K562 (cell line): ENCODE measurements at regions of chr6 and their contacts with region 1.

Region 1: DNA sequence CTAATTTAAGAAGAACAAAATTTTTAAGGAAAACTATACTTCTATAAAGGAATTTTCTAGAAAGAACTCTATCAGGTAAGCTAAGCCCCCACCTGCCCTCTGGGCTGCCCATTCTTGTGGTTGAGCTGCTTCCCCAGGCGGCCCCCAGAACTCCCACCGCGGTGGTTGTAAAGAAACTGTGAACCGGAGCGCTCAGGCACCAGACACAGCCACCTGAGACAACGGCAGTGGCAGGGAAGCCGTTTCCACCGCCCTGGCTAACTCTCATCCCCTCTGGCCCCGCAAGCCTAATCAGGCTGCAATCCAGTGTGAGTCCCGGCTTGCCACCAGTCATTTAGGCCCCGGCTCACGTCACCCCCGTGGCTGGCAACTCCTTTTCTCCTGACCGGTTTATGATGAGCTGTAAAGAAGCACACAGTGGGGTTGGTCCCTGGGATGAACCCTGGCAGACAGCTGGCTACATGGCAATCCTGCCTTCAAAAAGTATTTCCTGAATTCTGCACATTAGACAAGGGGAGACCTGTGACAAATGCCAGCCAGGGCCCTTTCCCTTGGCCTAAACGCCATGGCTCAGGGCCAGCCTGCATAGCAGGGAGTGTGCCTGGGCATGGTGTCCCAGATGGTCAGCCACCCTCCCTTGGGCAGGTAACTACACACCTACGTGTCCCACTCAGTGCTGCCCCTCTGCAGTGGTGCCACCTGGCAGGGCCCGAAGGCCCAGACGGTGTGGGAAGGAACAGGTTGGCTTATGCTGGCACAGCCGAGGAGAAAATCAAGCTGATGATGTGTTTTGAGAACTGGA is 63.8 kb upstream of the GPR31 start:
- DNase-seq: no peak
- ATAC-seq: no peak
- H3K4me3 ChIP-seq: no peak overlapping the region
- H3K27ac ChIP-seq: no peak overlapping the region
- H3K4me1 ChIP-seq: no peaks in the 10 kb centered on the region
- H3K27me3 ChIP-seq: peaks cover 16 to 26% of the 10 kb centered on the region in 2 experiments; a peak in 3 of 5 replicates
- CTCF ChIP-seq: no peak
- EP300 ChIP-seq: no peak
- POLR2A ChIP-seq: no peak
- RAD21 ChIP-seq: no peak

Region 2: DNA sequence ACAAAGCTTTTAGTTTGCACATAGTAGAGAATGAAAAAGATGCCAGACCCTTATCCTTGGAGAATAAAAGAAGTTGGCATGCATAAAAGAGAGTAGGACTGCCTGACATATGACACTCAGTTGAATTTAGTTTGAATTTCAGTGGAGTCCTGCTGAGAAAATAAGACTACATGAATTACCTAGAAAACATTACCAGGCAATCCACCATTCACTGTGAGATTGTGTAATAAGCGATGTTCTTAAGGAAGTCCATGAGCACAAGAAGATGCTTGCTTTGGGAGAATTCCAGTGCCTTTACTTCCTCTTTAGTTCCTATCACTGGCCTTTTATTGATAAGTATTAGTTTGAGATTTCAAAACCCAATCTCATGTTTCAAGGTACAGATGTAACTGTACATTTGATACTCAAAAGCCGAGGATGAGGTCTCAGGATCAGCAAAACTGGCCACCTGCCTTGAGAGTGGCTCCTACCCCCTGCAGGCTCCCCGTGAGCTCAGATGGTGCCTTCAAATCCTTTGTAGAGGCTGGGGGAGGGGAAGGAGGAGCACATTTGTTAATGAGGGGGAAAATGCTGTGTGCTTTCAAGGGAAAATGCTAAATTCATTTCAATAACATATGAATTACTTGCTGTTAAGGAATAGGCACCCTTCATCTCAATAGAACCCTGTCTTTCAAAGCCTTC is 58.3 kb after region 1 on chr6:
- CTCF ChIA-PET with region 1: no interaction called
- POLR2A ChIA-PET with region 1: interaction called, 3 read pairs
- in situ Hi-C with region 1: loop called (anchors 5 kb)
- intact Hi-C with region 1: no loop called
- DNase-seq: no peak
- ATAC-seq: no peak
- H3K4me3 ChIP-seq: no peak overlapping the region
- H3K27ac ChIP-seq: no peak overlapping the region
- H3K4me1 ChIP-seq: no peaks in the 10 kb centered on the region
- H3K27me3 ChIP-seq: peaks cover 4 to 33% of the 10 kb centered on the region in 2 experiments; a peak in 3 of 5 replicates
- CTCF ChIP-seq: no peak
- EP300 ChIP-seq: no peak
- POLR2A ChIP-seq: no peak
- RAD21 ChIP-seq: no peak

Region 3: DNA sequence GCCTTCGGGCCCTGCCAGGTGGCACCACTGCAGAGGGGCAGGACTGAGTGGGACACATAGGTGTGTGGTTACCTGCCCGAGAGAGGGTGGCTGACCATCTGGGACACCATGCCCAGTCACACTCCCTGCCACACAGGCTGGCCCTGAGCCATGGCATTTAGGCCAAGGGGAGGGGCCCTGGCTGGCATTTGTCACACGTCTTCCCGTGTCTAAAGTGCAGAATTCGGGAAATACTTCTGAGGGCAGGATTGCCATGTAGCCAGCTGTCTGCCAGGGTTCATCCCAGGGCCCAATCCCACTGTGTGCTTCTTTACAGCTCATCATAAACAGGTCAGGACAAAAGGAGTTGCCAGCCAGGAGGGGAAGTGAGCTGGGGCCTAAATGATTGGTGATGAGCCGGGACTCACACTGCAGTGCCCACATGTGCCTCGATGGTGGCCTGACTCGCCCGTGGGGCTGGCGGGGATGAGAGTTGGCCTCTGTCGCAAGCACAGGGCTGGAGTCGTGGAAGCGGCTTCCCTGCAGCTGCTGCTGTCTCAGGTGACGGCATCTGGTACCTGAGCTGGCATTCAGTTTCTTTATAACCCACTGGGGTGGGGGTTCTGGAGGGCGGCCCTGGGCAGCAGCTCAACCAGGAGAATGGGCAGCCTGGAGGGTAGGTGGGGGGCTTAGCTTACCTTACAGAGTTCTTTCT is 63.6 kb after region 1 on chr6:
- CTCF ChIA-PET with region 1: no interaction called
- POLR2A ChIA-PET with region 1: interaction called, 4 read pairs
- in situ Hi-C with region 1: loop called (anchors 5 kb)
- intact Hi-C with region 1: loop called (anchors 1 kb)
- DNase-seq: no peak
- ATAC-seq: no peak
- H3K4me3 ChIP-seq: no peak overlapping the region
- H3K27ac ChIP-seq: no peak overlapping the region
- H3K4me1 ChIP-seq: no peaks in the 10 kb centered on the region
- H3K27me3 ChIP-seq: peaks cover 11 to 39% of the 10 kb centered on the region in 2 experiments; a peak in 4 of 5 replicates
- CTCF ChIP-seq: no peak
- EP300 ChIP-seq: no peak
- POLR2A ChIP-seq: no peak
- RAD21 ChIP-seq: no peak